ENCODE measurements at regions of chr10 and their contacts with region 1.

Region 1: GRCh38 chr10:58282615-58283014 is 13.7 kb downstream of the CISD1 start:
- DNase-seq: peak; percentile 81
- H3K4me3 Mint-ChIP-seq: peak overlapping the region; percentile 63
- H3K27ac Mint-ChIP-seq: peak overlapping the region; percentile 70
- H3K4me1 Mint-ChIP-seq: peaks cover 32% of the 10 kb centered on the region
- H3K27me3 Mint-ChIP-seq: no peaks in the 10 kb centered on the region

Region 2: GRCh38 chr10:58237014-58237830 is 45.4 kb before region 1 on chr10:
- intact Hi-C with region 1: loop called (anchors 1 kb)
- DNase-seq: no peak
- H3K4me3 Mint-ChIP-seq: no peak overlapping the region
- H3K27ac Mint-ChIP-seq: peak overlapping the region; percentile 91
- H3K4me1 Mint-ChIP-seq: peaks cover 38% of the 10 kb centered on the region
- H3K27me3 Mint-ChIP-seq: no peaks in the 10 kb centered on the region